ENCODE measurements at regions of chr1 and their contacts with region 1.

Region 1: DNA sequence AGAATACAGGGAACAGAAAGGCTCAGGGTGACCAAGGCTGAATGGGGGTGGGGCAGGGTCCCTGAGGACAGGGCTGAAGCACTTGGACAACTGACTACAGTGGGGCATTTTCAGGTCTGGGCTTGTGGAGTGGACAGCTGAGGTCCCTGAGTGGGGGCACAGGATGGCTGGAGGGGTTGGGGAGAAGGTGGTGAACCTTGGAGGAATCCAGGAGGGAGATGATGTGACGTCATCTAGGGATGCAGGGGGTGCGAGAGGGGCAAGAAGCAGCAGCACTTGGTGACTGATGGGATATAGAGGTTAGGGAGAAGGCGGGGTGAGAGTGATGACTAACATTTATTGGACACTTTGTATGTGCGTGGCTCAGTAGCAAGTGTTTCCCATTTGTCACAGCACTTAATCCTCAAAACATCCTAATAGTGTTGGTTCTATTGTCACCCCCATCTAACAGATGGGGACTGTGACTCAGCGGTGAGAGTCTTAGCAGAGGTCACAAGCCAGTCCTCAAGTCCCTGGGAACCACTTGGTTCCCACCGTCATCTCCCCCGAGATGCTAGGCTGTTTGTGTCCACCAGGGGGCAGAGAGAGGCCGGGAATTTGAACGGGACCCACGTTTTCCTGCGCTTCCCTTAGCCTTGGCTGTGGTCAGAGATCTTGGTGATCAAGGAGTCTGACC is 27.9 kb upstream of the BMP8B start:
- DNase-seq: peak; percentile 78
- ATAC-seq: peak; percentile 85

Region 2: DNA sequence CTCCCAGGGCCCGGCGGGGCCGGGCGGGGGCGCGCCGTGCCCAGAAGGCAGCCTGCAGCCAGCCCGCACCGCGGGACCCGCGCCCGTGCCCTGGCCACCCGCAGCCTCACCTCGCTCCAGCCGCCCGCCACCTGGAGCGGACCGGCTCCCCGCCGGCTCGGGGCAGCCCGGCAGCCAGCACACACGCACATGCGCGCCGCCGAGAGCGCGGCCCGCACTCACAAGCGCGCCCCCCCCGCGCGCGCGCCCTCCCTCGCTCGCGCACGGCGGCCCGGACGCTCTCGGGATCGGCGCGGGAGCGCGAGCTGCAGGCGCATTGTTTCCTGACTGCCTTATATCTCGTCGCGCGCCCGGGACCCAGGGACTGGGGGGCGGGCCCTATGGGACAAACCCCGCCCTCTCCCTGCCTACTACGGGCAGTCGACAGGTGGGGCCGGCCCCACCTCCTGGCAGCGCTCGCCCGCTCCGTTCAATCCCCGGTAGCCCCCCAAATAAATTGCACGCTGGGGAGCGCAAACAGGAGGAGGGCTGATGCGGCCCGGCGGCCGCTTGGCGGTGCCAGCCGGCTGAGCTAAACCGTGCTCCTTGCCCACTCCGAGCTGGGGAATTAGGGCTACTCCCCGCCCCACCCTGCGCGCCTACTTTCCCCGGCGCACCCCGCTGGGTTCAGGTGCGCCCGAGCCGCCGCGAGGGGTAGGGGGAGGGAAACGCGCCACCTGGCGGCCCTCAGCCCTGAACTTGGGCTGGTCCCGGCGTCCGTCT is 85.3 kb after region 1 on chr1 and contains the start of gene MYCL:
- intact Hi-C with region 1: loop called (anchors 2 kb)
- DNase-seq: peak; percentile 81
- ATAC-seq: peak; percentile 91
- total RNA-seq, gene MYCL: 1.2 TPM

Region 3: DNA sequence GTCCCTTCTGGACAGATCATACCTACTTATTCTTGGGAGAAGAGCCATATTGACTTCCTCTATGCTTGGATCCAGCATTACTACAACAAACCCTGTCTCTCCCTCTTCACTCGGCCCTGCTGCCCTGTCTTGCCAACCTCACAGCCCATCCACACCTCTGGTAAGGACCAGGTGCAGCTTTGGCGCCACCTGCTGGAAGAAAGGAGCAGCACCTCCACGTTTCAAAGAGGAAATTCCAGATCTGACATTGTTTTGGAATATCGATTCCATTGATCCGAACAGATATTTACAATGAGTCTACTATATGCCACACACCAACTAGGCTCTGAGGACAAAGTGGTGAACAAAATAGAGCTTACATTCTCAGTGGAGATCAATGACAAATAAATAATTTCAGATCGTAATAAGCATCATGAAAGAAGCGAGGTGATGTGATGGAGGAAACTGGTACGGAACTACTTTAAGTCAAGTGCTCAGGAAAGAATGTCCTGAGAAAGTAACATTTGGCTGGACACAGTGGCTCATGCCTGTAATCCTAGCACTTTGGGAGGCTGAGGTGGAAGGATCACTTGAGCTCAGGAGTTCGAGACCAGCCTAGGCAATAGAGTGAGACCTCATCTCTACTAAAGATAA is 157.1 kb after region 1 on chr1:
- intact Hi-C with region 1: loop called (anchors 2 kb)
- DNase-seq: peak; percentile 86
- ATAC-seq: peak; percentile 81

Region 4: DNA sequence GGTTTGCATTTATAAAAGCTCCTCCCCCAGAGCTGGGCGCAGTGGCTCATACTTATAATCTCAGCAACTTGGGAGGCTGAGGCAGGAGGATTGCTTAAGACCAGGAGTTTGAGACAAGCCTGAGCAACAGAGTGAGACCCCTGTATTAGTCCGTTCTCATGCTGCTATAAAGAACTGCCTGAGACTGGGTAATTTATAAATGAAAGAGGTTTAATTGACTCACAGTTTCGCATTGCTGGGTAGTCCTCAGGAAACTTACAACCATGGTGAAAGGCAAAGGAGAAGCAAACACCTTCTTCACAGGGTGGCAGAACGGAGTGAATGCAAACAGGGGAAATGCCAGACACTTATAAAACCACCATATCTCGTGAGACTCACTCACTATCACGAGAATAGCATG is 767.4 kb after region 1 on chr1:
- intact Hi-C with region 1: no loop called
- DNase-seq: no peak
- ATAC-seq: no peak